ENCODE measurements at regions of chr1 and their contacts with region 1.

Region 1: DNA sequence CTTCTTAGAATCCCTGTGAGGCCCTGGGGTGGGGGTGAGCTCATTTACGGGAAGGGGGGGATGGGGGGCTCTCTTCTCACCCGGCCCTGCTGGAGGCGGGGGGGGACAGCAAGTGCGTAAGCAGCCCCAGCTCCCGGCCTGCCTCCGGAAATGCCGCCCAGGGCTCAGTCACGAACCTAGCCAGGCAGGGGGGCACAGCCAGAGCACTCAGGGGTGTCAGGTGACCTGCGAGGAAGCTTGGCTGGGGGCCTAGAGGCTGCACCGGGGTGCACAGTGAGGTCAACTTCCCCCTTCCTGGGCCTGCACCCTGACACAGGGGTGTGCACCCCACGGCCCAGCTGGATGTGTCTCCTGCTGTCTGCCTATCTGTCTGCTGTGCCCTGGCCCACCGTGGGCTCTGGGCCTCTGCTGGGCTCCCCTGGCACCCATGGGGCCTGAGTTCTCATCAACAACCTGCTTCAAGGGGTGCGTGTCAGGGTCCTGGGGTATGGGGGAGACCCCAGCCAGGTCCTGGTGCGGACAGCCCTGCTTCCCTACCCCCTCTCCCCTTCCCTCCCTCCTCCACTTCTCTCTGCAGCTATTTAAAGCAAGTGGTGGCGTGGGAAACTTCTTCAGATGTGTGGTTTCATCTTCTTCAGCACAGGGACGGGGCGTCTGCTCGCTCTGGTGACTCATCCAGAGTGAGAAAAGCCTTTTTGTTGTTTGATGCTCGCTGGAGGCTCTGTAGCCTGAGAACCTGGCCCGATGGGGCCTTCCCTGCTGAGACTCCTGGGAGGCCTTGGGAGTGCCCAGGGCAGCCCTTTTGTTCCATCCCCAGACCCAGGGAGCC is 92.5 kb upstream of the RUNX3 start:
- DNase-seq: peak; percentile 97
- H3K4me3 Mint-ChIP-seq: peak overlapping the region; percentile 69
- H3K27ac Mint-ChIP-seq: peak overlapping the region; percentile 93
- H3K4me1 Mint-ChIP-seq: peaks cover 84% of the 10 kb centered on the region
- H3K27me3 Mint-ChIP-seq: no peaks in the 10 kb centered on the region

Region 2: GRCh38 chr1:24744911-24745710 is 277.5 kb before region 1 on chr1 and contains the start of gene CLIC4:
- intact Hi-C with region 1: loop called (anchors 1 kb)
- DNase-seq: peak; percentile 100
- H3K4me3 Mint-ChIP-seq: peak within 1 kb of the TSS; percentile 94
- H3K27ac Mint-ChIP-seq: peak within 1 kb of the TSS; percentile 86
- H3K4me1 Mint-ChIP-seq: peaks cover 53% of the 10 kb centered on the region
- H3K27me3 Mint-ChIP-seq: no peaks in the 10 kb centered on the region
- total RNA-seq, gene CLIC4: 15.7 and 17.4 TPM in 2 replicates

Region 3: DNA sequence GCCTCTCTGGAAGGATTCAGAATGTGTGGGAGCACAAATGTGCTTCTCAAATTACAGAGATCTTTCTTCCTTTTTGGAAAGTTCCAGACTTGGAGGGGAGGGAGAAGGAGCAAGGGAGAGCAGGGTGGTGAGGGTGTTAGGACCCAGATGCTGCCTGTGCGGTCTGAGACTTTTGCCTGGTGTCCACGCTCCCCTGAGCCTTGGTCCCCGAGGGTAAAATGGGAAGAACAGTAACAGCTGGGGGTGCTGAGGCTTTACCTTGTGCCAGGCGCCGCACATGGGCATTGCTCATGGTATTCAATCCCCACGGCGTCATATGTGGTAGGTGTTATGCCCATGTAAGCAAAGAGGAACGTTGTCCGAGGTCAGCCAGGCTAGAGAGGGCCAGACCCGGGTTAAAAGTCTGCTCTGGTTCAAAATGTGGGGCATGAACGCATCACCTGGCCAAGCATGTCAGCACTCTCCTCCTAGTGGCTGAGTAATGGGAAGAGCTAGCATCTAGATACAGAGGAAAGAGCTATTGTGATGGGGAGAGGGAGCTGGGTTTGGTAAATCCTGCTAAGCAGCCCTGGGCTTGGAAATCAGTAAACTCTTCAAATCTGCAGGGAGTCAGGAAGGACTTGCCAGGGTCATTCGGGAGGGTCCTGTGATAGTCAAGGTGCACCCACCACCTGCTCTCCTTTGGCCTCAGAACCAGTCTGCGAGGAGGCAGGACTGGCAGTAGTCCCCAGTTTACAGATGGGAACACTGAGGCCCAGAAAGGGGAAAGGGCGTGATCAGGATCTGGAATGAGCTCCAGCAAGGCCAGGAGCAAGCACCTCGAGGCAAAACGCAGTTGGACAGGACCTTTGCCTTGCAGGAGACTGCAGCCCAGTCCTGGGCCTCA is 88.0 kb before region 1 on chr1:
- intact Hi-C with region 1: no loop called
- DNase-seq: no peak
- H3K4me3 Mint-ChIP-seq: peak overlapping the region; percentile 25
- H3K27ac Mint-ChIP-seq: peak overlapping the region; percentile 76
- H3K4me1 Mint-ChIP-seq: peaks cover 52% of the 10 kb centered on the region
- H3K27me3 Mint-ChIP-seq: no peaks in the 10 kb centered on the region

Region 4: DNA sequence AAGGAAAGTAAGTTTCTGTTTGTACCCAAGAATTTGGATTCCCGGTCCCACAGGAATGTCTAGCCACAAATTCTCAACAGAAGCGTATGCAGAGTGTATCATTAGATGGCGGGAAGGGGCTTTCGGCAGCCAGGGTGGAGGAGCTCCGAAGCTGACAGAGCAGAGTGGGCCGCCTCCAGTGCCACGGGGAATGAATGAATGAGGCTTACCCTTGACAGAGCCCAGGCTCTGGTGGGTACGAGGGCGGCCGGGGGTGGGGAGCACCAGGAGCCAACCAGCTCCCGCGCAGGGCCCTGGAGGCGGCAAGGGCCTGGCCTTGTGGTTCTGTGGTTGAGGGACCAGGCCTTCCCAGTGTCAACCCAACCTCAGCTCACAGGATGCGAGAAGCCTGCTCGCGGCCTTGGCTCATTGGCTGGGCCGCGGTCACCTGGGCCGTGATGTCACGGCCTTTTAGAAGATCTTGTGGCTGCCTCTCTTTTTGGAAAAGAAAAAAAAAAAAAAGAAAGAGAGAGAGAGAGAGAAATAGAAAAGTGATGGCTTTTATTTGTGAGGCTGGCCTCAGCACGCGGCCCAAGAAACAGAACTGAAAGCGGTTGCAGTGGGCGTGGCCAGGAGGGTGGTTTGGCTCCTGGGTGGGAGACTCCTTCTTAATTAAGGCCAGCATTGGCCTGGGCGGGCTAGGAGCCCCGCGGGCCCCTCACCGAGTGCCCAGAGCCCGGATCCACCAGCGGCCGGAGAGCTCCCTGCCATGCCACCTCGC is 57.6 kb before region 1 on chr1:
- intact Hi-C with region 1: loop called (anchors 1 kb)
- DNase-seq: peak; percentile 98
- H3K4me3 Mint-ChIP-seq: peak overlapping the region; percentile 96
- H3K27ac Mint-ChIP-seq: peak overlapping the region; percentile 97
- H3K4me1 Mint-ChIP-seq: peaks cover 71% of the 10 kb centered on the region
- H3K27me3 Mint-ChIP-seq: no peaks in the 10 kb centered on the region

Region 5: GRCh38 chr1:24990779-24991641 is 31.6 kb before region 1 on chr1:
- intact Hi-C with region 1: loop called (anchors 2 kb)
- DNase-seq: no peak
- H3K4me3 Mint-ChIP-seq: peak overlapping the region; percentile 83
- H3K27ac Mint-ChIP-seq: peak overlapping the region; percentile 100
- H3K4me1 Mint-ChIP-seq: peaks cover 80% of the 10 kb centered on the region
- H3K27me3 Mint-ChIP-seq: no peaks in the 10 kb centered on the region

Measured in activated CD4-positive, alpha-beta T cell treated with anti-CD3 and anti-CD28 coated beads, Interleukin-2, amount 10 ng/mL, durations not matched to agents 24 days and 14 days (primary cell).